GM23248 (cell line): ENCODE measurements at regions of chr17 and their contacts with region 1.

Region 1: DNA sequence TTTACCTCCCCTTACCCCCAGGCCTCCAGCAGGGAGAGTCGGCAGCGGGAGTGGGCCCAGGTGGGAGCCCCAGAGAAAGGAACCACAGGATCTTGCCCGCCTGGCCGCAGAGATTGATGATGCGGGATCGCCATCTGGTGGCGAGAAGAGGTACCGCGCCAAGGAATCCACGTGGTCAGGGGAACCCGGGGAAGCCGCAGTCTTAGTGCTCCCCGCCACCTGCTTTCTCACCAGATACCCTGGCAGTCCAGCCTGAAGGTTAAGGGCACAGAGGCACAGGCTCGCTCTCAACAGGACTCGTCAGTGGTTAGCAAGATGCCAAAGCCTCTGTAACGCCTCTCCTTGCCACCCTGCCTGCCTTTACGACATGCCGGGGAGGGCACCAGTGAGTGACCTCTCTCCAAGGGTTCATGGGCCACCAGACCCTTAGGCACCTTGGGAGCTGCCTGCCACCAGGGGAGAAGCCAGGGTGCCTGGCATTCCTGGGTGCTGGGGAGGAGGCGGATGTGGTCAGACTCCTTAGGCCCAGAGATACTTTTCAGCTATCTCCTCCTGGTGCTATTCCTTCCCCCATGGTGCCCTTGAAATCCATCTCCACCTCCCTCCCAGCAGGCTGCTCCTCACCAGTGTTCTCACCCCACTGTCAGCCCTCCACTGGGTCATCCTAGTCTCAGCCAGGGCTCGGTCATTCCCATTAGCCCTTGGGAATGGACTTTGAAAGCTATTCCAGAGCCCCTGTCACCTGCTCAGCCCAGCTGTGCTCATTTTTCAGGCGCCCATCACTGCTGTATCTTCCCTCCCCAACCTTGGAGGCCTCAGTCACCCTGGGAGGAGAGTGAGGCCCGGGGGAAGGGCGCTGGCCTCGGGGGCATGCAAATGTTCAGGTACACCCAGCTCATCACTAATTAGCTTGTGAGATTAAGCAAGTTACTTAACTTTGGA is 5.5 kb upstream of the RHBDF2 start:
- DNase-seq: peak; percentile 78
- H3K4me3 ChIP-seq: no peak overlapping the region
- H3K27ac ChIP-seq: no peak overlapping the region
- H3K4me1 ChIP-seq: peaks cover 9% of the 10 kb centered on the region; the same call in 1 of the 2 replicates
- H3K27me3 ChIP-seq: no peaks in the 10 kb centered on the region

Region 2: DNA sequence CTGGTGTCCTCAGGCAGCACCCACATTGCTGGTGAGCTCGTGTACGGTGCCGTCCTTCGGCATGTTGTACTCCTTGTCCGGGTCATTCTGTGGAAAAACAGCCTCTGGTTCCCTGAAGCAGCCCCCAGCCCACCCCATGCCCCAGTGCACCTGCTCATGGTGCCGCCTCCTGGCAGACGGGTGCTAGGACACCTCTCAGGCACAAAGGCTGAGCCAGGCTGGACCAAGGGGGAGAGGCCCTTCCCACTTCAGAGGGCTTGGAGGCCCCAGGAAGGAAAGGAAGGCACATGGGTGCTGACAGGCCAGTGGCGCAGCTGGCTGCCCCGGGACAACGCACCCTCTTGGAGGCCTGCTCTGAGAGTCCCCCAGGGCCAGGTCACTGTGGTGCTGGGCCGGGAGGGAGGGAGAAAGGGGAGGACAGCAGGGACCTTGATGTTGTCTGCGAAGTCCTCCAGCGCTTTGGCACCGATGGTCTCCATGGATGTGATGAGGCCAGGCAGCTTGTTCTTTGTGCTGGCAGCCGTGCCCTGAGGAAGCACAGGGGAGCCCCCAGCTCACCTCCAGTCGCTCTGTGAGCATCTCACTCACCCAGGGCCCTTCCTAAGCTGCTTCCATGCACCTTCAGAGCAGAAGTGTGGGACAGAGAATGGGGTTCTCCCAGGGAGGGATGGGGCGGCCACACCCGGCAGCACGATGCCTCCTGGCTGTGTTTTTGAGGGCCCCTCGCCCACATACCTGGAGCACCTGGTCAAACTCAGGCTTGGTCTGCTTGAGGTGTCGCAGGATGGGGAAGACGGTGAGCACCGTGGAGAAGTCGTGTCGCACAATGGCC is 418.4 kb before region 1 on chr17:
- in situ Hi-C with region 1: no loop called
- DNase-seq: no peak
- H3K4me3 ChIP-seq: no peak overlapping the region
- H3K27ac ChIP-seq: no peak overlapping the region
- H3K4me1 ChIP-seq: no peaks in the 10 kb centered on the region
- H3K27me3 ChIP-seq: no peaks in the 10 kb centered on the region

Region 3: GRCh38 chr17:76314392-76315227 is 192.1 kb before region 1 on chr17:
- in situ Hi-C with region 1: no loop called
- DNase-seq: no peak
- H3K4me3 ChIP-seq: no peak overlapping the region
- H3K27ac ChIP-seq: no peak overlapping the region
- H3K4me1 ChIP-seq: no peaks in the 10 kb centered on the region
- H3K27me3 ChIP-seq: no peaks in the 10 kb centered on the region

Region 4: GRCh38 chr17:76467366-76467765 is 39.3 kb before region 1 on chr17 and contains the start of gene AANAT:
- in situ Hi-C with region 1: loop called (anchors 5 kb)
- DNase-seq: no peak
- H3K4me3 ChIP-seq: no peak within 1 kb of the TSS
- H3K27ac ChIP-seq: no peak within 1 kb of the TSS
- H3K4me1 ChIP-seq: no peaks in the 10 kb centered on the region; the same call in 1 of the 2 replicates
- H3K27me3 ChIP-seq: no peaks in the 10 kb centered on the region
- total RNA-seq, gene AANAT: not detected in 2 replicates